ENCODE measurements at regions of chr4 and their contacts with region 1.

Region 1: GRCh38 chr4:138576684-138577083 is 334.5 kb upstream of the SLC7A11 start:
- DNase-seq: no peak
- ATAC-seq: peak; percentile 71
- H3K4me3 ChIP-seq: no peak overlapping the region
- H3K27ac ChIP-seq: no peak overlapping the region
- H3K4me1 ChIP-seq: no peaks in the 10 kb centered on the region
- H3K27me3 ChIP-seq: no peaks in the 10 kb centered on the region
- CTCF ChIP-seq: peak in 2 of 3 experiments; percentile 34 to 41; a peak in 4 of 6 replicates
- EP300 ChIP-seq: no peak
- POLR2A ChIP-seq: no peak
- RAD21 ChIP-seq: peak; percentile 60

Region 2: GRCh38 chr4:137735561-137736104 is 841.1 kb before region 1 on chr4:
- CTCF ChIA-PET with region 1: no interaction called
- POLR2A ChIA-PET with region 1: no interaction called
- RAD21 ChIA-PET with region 1: no interaction called
- SMC1A ChIA-PET with region 1: no interaction called
- in situ Hi-C with region 1: no loop called
- intact Hi-C with region 1: loop called (anchors 5 kb)
- DNase-seq: no peak
- ATAC-seq: peak; percentile 75
- H3K4me3 ChIP-seq: no peak overlapping the region
- H3K27ac ChIP-seq: no peak overlapping the region
- H3K4me1 ChIP-seq: no peaks in the 10 kb centered on the region
- H3K27me3 ChIP-seq: no peaks in the 10 kb centered on the region
- CTCF ChIP-seq: peak in 1 of 3 experiments; percentile 23; a peak in 1 of 6 replicates
- EP300 ChIP-seq: no peak
- POLR2A ChIP-seq: no peak
- RAD21 ChIP-seq: no peak

Region 3: GRCh38 chr4:137819964-137820383 is 756.7 kb before region 1 on chr4:
- CTCF ChIA-PET with region 1: interaction called, 3 read pairs
- POLR2A ChIA-PET with region 1: no interaction called
- RAD21 ChIA-PET with region 1: no interaction called
- SMC1A ChIA-PET with region 1: no interaction called
- in situ Hi-C with region 1: no loop called
- intact Hi-C with region 1: loop called (anchors 5 kb)
- DNase-seq: peak; percentile 1
- ATAC-seq: peak; percentile 97
- H3K4me3 ChIP-seq: no peak overlapping the region
- H3K27ac ChIP-seq: no peak overlapping the region
- H3K4me1 ChIP-seq: no peaks in the 10 kb centered on the region
- H3K27me3 ChIP-seq: no peaks in the 10 kb centered on the region
- CTCF ChIP-seq: peak; percentile 62 to 77 (median 66)
- EP300 ChIP-seq: no peak
- POLR2A ChIP-seq: no peak
- RAD21 ChIP-seq: peak; percentile 89

Region 4: DNA sequence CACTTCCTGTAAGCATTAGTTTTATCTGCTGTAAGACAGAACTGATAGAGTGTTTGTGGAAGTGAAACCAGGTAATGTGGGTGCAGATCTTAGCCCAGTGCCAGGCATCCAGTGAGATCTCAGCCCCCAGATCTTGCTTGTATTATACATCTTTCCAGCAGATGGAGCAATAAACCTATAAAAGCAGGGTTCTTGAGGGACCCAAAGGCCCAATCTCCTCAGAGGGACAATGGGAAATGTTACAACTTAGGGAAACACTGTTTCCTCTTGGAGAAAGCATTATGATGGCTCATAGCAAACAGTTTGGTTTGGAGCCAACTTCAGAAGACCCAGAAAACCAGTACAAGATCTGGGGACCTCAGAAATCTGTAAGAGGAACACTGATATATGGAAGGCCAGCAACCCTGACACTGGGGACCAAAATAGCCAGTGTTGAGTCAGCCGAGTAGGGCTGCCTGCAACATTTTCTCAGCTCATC is 540.9 kb before region 1 on chr4:
- CTCF ChIA-PET with region 1: interaction called, 3 read pairs
- POLR2A ChIA-PET with region 1: no interaction called
- RAD21 ChIA-PET with region 1: interaction called, 5 read pairs
- SMC1A ChIA-PET with region 1: interaction called, 3 read pairs
- in situ Hi-C with region 1: no loop called
- intact Hi-C with region 1: loop called (anchors 1 kb)
- DNase-seq: peak; percentile 69
- ATAC-seq: peak; percentile 100
- H3K4me3 ChIP-seq: no peak overlapping the region
- H3K27ac ChIP-seq: no peak overlapping the region
- H3K4me1 ChIP-seq: no peaks in the 10 kb centered on the region
- H3K27me3 ChIP-seq: no peaks in the 10 kb centered on the region
- CTCF ChIP-seq: peak; percentile 44 to 71 (median 64); a peak in 5 of 6 replicates
- EP300 ChIP-seq: 0 out of 4 replicates have a peak, but pooled peaks of 1 of the 2 experiments have one; percentile 43
- POLR2A ChIP-seq: no peak
- RAD21 ChIP-seq: peak; percentile 86

Measured in GM12878 (cell line).